ENCODE measurements at regions of chr4 and their contacts with region 1.

Region 1: GRCh38 chr4:154618708-154619315 is 6.4 kb upstream of the FGG start:
- DNase-seq: peak; percentile 51
- ATAC-seq: peak; percentile 89
- H3K4me3 ChIP-seq: no peak overlapping the region
- H3K27ac ChIP-seq: no peak overlapping the region
- H3K4me1 ChIP-seq: peaks cover 0 to 3% of the 10 kb centered on the region in 2 experiments; a peak in 1 of 4 replicates
- H3K27me3 ChIP-seq: no peaks in the 10 kb centered on the region
- CTCF ChIP-seq: peak; percentile 77 to 83 (median 81)
- POLR2A ChIP-seq: no peak
- RAD21 ChIP-seq: peak; percentile 83

Region 2: GRCh38 chr4:153773236-153773690 is 845.5 kb before region 1 on chr4:
- CTCF ChIA-PET with region 1: no interaction called
- POLR2A ChIA-PET with region 1: no interaction called
- RAD21 ChIA-PET with region 1: no interaction called
- intact Hi-C with region 1: loop called (anchors 10 kb)
- DNase-seq: no peak
- ATAC-seq: no peak
- H3K4me3 ChIP-seq: no peak overlapping the region
- H3K27ac ChIP-seq: no peak overlapping the region
- H3K4me1 ChIP-seq: no peaks in the 10 kb centered on the region
- H3K27me3 ChIP-seq: no peaks in the 10 kb centered on the region
- CTCF ChIP-seq: peak in 2 of 3 experiments; percentile 13 to 34; a peak in 1 of 6 replicates
- POLR2A ChIP-seq: no peak
- RAD21 ChIP-seq: peak; percentile 51

Region 3: GRCh38 chr4:154344686-154345085 is 274.1 kb before region 1 on chr4:
- CTCF ChIA-PET with region 1: interaction called, 11 read pairs
- POLR2A ChIA-PET with region 1: no interaction called
- RAD21 ChIA-PET with region 1: no interaction called
- intact Hi-C with region 1: no loop called
- DNase-seq: peak; percentile 19
- ATAC-seq: peak; percentile 91
- H3K4me3 ChIP-seq: no peak overlapping the region
- H3K27ac ChIP-seq: no peak overlapping the region
- H3K4me1 ChIP-seq: no peaks in the 10 kb centered on the region
- H3K27me3 ChIP-seq: no peaks in the 10 kb centered on the region
- CTCF ChIP-seq: peak; percentile 24 to 43 (median 36); a peak in 4 of 6 replicates
- POLR2A ChIP-seq: no peak
- RAD21 ChIP-seq: peak; percentile 45; the same call in 1 of the 2 replicates

Region 4: DNA sequence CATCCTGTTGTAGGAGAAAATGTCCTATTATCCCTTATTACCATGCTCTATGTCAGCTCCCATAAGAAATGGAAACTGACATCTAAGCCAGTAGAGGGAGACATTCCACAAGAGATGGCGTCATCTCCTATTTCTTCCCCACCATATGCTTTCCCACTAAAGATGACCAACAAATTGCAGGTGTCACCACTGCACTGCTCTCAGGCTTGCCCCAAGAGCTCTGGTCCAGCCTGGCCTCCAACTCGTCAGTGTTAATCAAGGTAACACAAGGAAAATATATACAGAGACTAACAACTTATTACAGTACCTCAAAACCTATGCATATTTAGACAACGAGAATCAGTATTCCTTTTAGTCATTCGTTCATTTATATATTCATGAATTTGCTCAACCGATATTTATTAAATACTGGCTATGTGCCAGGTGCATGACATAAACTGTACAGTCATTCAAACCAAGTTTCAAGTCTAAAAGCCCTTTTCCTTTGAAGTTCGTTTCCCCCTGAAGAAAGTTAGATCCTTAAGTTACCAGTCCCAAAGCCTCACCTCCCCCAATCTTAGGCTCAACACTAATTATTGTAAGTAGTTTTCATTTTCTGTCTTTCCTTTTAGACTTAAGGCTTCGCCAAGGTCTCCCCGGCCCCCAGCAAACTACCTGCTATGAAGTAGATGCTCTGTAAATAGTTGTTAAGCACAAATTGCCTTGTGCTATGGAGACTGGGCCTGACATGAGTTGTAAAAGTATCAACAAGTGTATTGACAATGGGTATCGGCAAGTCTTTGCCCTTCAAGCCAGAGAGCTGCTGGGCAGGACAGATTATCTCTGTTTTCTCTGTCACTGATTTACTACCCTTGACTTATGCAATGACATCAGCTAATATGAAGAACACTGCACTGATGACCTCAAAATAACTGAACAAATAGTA is 59.1 kb before region 1 on chr4:
- CTCF ChIA-PET with region 1: interaction called, 119 read pairs
- POLR2A ChIA-PET with region 1: interaction called, 4 read pairs
- RAD21 ChIA-PET with region 1: interaction called, 9 to 16 read pairs
- intact Hi-C with region 1: loop called (anchors 1 kb)
- DNase-seq: peak; percentile 44
- ATAC-seq: peak; percentile 95
- H3K4me3 ChIP-seq: no peak overlapping the region
- H3K27ac ChIP-seq: no peak overlapping the region
- H3K4me1 ChIP-seq: no peaks in the 10 kb centered on the region
- H3K27me3 ChIP-seq: no peaks in the 10 kb centered on the region
- CTCF ChIP-seq: peak; percentile 53 to 76 (median 65)
- POLR2A ChIP-seq: no peak
- RAD21 ChIP-seq: peak; percentile 83

Region 5: DNA sequence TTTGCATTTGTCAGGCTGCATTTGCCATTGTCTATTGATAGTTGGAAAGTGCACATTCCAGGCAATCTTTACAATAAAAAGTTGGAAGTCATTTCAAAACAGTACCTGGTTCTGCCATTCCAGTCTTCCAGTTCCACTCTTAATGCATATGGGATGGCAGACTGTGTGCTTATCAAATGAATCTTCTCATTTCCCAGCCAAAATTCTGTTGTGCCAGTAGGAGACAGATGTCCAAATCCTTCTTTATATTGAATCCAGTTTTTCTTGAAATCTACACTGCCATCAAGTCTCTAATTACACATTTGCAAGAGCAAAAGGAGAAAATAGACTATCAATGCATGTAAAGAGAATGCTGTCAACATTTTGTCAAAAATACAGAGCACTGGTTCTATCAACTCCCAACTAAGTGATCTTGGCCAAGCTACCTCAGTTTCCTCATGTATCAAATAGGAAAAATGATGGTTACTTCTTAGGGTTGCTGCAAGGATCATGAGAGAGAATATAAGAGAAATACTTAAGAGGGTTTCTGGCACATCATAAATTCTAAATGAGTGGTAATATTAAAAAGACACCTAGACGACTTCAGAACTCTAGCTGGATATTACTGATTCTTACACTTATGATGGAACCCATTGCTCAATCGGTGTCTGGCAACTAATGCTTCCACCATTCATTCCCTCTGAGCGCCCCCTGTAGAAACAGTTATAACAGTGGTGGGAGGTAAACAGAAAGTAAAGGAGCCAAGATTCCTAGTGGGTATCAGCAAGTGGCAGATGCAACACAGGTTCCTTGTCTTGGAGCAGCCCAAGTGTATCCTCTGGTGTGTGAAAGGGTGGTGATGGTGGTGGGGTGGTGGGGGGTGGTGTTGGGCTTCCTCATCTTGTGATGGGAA is 10.2 kb before region 1 on chr4:
- CTCF ChIA-PET with region 1: interaction called, 17 read pairs
- POLR2A ChIA-PET with region 1: no interaction called
- RAD21 ChIA-PET with region 1: no interaction called
- intact Hi-C with region 1: no loop called
- DNase-seq: no peak
- ATAC-seq: no peak
- H3K4me3 ChIP-seq: no peak overlapping the region
- H3K27ac ChIP-seq: no peak overlapping the region
- H3K4me1 ChIP-seq: peaks cover 0 to 4% of the 10 kb centered on the region in 2 experiments; a peak in 1 of 4 replicates
- H3K27me3 ChIP-seq: no peaks in the 10 kb centered on the region
- CTCF ChIP-seq: no peak
- POLR2A ChIP-seq: no peak
- RAD21 ChIP-seq: no peak